HEK293 (cell line): ENCODE measurements at regions of chr12 and their contacts with region 1.

Region 1: DNA sequence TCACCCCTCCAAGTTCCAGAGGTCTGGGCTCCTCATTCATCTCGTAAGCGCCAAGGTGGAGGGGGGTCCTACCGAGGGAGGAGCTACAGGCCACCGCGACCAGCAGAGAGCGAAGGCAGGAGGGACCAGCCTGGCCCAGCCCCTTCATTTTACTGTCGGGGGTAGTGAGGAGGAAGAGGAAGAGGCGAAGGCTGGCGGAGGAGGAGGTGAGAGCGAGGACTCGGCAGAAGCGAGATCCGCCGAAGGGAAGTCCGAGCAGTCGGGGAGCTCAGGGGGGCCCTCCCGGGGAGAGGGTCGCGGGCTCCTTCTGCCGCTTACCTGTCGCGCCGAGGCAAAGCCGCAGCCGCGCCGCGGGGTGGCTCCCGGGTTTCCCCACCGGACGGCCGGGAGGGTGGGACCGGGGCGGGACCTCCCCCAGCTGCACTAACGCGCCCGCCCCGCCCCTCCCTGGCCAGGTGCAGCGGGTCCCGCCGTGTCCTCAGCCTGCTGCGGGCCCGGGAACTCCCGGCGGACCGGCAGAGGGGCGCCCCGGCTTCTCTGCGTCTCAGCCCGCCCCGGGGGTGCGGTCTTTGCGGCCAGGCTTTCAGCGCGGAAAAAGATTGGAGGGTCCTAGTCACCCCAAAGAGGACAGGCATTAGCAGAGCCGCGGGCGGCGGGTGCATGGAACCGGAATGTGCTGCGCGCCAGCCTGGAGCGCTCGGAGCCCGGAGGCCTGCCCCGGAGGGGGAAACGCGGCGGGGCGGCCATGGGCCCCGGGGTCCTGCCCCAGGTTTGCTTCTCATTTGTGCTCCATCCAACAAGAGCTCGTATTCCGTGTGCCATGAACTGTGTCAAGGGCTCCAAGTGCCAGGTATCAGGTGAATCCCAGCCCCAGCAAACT is at the start of gene GALNT6:
- H3K4me3 ChIP-seq: peak within 1 kb of the TSS; percentile 53
- H3K27ac ChIP-seq: peak within 1 kb of the TSS; percentile 50; the same call in 1 of the 2 replicates
- H3K4me1 ChIP-seq: peaks cover 7% of the 10 kb centered on the region
- CTCF ChIP-seq: no peak

Region 2: GRCh38 chr12:51371295-51371953 is 20.1 kb before region 1 on chr12:
- CTCF ChIA-PET with region 1: interaction called, 3 read pairs
- POLR2A ChIA-PET with region 1: interaction called, 31 read pairs
- H3K4me3 ChIP-seq: no peak overlapping the region
- H3K27ac ChIP-seq: peak overlapping the region; percentile 42; the same call in 1 of the 2 replicates
- H3K4me1 ChIP-seq: peaks cover 6% of the 10 kb centered on the region
- CTCF ChIP-seq: no peak

Region 3: GRCh38 chr12:51471111-51471864 is 79.8 kb after region 1 on chr12:
- CTCF ChIA-PET with region 1: no interaction called
- POLR2A ChIA-PET with region 1: no interaction called
- H3K4me3 ChIP-seq: no peak overlapping the region
- H3K27ac ChIP-seq: no peak overlapping the region
- H3K4me1 ChIP-seq: no peaks in the 10 kb centered on the region
- CTCF ChIP-seq: no peak